ENCODE measurements at regions of chr9 and their contacts with region 1.

Region 1: DNA sequence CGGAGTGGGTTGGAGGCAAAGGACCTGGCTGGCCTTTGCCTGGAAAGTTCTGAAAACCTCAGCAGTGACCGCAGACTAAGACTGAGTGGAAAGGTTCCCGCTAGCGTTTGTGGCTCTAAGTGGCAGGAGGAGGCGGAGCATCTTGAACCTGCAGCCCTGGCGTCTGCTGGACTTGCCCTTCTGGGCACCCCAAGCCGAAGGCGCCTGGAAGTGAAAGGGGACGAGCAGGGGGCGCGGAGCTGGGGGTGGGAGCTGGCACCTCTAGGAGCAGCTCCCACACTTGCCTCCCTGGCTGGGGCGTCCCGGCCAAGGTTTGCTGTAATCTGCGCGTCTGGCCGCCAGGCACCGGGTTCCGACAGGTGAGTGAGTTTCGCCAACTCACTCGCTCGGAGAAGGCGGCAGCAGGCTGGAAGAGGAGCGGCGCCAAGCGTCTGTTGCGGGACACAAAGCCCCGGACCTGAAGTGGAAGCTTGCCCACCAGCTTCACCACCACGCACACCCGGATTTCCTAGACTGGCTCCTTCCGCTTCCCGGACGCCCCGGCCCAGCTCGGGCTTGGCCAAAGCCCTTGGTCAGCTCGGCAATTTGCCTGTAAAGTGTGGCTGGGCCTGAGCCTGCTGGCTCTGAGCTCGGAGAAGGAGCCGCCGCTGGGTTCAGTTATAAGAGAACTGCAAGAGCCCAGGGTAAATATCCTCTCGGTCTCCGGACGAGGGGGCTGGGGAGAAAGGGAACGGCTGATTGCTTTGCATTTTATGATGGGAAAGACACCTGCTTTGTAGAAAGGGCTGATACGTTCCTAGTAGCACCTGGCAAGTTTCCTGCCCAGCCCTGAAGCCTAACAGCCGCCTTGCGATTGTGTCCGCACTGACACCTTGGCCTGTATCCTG is at the start of gene GNA14:
- DNase-seq: peak; percentile 14 to 29
- H3K4me3 ChIP-seq: peak within 1 kb of the TSS; percentile 19
- H3K4me3 Mint-ChIP-seq: peak within 1 kb of the TSS; percentile 43
- H3K27ac Mint-ChIP-seq: no peak within 1 kb of the TSS
- H3K4me1 ChIP-seq: no peaks in the 10 kb centered on the region
- H3K4me1 Mint-ChIP-seq: no peaks in the 10 kb centered on the region
- H3K27me3 ChIP-seq: no peaks in the 10 kb centered on the region
- H3K27me3 Mint-ChIP-seq: no peaks in the 10 kb centered on the region
- CTCF ChIP-seq: no peak
- total RNA-seq, gene GNA14: not detected in 2 replicates

Region 2: DNA sequence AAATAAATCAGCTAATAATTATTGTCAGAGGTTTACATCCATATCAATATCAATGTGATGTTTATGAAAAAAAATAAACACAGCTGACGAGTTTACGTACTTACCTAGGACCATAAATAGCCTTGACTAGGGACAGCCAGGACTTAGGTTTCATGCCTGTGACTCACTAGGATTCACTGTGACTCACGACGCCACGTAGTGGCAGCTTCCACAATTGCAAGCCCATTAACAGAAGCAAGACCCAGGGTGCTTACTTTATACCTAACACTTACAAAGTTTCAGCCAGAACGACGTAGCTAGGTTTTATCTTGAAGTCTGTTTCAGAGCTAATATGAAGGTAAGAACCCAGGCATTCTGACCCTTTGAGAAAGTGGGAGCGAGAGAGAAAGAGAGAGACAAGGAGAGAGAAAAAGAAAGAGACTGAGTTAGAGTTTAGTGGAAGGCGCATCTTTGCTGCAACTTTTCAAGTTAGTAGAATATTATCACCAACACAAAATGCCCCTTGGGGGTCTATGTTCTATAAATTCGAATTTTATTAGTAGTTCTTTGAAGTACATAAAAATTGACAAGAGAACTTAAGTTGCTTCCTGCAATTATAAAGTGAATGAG is 191.5 kb before region 1 on chr9:
- CTCF ChIA-PET with region 1: no interaction called
- POLR2A ChIA-PET with region 1: no interaction called
- intact Hi-C with region 1: loop called (anchors 10 kb)
- DNase-seq: peak; percentile 62 to 64
- H3K4me3 ChIP-seq: no peak overlapping the region
- H3K4me3 Mint-ChIP-seq: no peak overlapping the region
- H3K27ac Mint-ChIP-seq: no peak overlapping the region
- H3K4me1 ChIP-seq: no peaks in the 10 kb centered on the region
- H3K4me1 Mint-ChIP-seq: no peaks in the 10 kb centered on the region
- H3K27me3 ChIP-seq: no peaks in the 10 kb centered on the region
- H3K27me3 Mint-ChIP-seq: no peaks in the 10 kb centered on the region
- CTCF ChIP-seq: peak in 1 of 2 experiments; percentile 51

Region 3: DNA sequence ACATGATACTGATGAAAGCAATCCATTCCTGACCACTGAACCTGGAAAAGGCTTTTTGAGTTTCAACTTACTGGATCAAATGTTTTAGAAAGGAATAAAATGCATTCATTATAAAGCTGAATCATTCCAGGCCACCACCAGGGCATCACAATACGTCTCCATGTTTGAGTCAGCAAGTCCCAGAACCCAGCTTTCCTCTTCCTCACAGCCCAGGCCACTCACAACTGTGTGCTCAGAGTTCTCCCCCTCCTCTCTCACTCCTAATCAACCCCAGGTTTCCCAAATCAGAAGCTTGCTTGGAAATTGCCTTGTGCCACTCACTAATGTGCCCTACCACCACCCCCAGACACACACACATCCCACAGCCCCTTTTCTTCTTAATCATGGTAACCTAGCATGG is 92.1 kb before region 1 on chr9:
- CTCF ChIA-PET with region 1: interaction called, 11 read pairs
- POLR2A ChIA-PET with region 1: no interaction called
- intact Hi-C with region 1: no loop called
- DNase-seq: no peak
- H3K4me3 ChIP-seq: no peak overlapping the region
- H3K4me3 Mint-ChIP-seq: no peak overlapping the region
- H3K27ac Mint-ChIP-seq: no peak overlapping the region
- H3K4me1 ChIP-seq: no peaks in the 10 kb centered on the region
- H3K4me1 Mint-ChIP-seq: no peaks in the 10 kb centered on the region
- H3K27me3 ChIP-seq: no peaks in the 10 kb centered on the region
- H3K27me3 Mint-ChIP-seq: no peaks in the 10 kb centered on the region
- CTCF ChIP-seq: no peak

Region 4: GRCh38 chr9:77756449-77756848 is 108.0 kb after region 1 on chr9:
- CTCF ChIA-PET with region 1: no interaction called
- POLR2A ChIA-PET with region 1: no interaction called
- intact Hi-C with region 1: no loop called
- DNase-seq: no peak
- H3K4me3 ChIP-seq: no peak overlapping the region
- H3K4me3 Mint-ChIP-seq: no peak overlapping the region
- H3K27ac Mint-ChIP-seq: no peak overlapping the region
- H3K4me1 ChIP-seq: no peaks in the 10 kb centered on the region
- H3K4me1 Mint-ChIP-seq: no peaks in the 10 kb centered on the region
- H3K27me3 ChIP-seq: no peaks in the 10 kb centered on the region
- H3K27me3 Mint-ChIP-seq: no peaks in the 10 kb centered on the region
- CTCF ChIP-seq: no peak

Measured in Caco-2 (cell line).